ENCODE measurements at regions of chr13 and their contacts with region 1.

Region 1: DNA sequence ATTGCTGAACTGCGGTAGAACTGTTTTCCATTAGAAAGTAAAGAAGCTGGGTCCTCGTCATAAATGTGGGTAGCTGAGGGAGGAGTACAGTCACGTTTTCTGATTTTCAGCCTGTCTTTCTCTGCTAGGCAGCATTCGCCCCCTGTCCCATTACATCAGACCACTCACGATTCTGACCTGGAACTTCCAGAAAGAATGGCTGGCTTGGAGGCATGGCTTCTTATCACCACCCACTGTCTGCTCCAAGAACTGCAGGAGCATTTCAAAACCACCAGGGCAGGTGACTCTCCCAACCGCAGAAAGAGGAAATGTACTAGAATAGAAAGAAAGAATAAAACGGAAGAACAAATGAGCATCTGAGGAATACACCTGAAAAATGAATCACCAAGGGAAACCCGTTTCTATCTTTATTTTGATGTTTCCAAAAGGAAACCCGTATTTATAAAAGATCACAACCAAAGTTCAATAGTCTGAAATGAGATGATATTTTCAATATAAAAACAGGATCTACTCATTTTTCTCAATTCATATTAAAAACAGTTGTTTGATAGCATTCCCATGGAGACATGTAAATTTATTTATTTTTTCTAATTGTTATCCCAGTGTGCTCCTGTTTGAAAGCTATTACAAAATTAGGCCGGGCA is 22.1 kb upstream of the POMP start:
- DNase-seq: peak; percentile 75
- ATAC-seq: peak; percentile 75
- H3K4me3 ChIP-seq: no peak overlapping the region
- H3K27ac ChIP-seq: no peak overlapping the region
- H3K4me1 ChIP-seq: peaks cover 8% of the 10 kb centered on the region; the same call in 1 of the 2 replicates
- H3K27me3 ChIP-seq: no peaks in the 10 kb centered on the region; the same call in 1 of the 2 replicates
- CTCF ChIP-seq: peak; percentile 86

Region 2: GRCh38 chr13:28058866-28059624 is 577.8 kb before region 1 on chr13:
- CTCF ChIA-PET with region 1: no interaction called
- POLR2A ChIA-PET with region 1: no interaction called
- intact Hi-C with region 1: loop called (anchors 5 kb)
- DNase-seq: peak; percentile 54
- ATAC-seq: no peak
- H3K4me3 ChIP-seq: no peak overlapping the region
- H3K27ac ChIP-seq: no peak overlapping the region
- H3K4me1 ChIP-seq: no peaks in the 10 kb centered on the region
- H3K27me3 ChIP-seq: peaks cover 35% of the 10 kb centered on the region
- CTCF ChIP-seq: peak; percentile 73

Region 3: DNA sequence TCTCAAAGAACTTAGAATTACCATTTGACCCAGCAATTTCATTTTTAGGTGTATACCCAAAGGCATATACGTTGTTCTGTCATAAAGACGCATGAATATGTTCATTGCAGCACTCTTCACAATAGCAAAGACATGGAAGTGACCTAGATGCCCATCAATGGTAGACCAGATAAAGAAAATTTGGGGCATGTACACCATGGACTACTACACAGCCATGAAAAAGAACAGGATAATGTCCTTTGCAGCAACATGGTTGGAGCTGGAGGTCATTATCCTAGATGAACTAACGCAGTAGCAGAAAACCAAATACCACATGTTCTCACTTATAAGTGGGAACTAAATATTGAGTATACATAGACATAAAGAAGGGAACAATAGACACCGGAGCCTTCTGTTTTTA is 477.7 kb before region 1 on chr13:
- CTCF ChIA-PET with region 1: no interaction called
- POLR2A ChIA-PET with region 1: no interaction called
- intact Hi-C with region 1: loop called (anchors 5 kb)
- DNase-seq: no peak
- ATAC-seq: no peak
- H3K4me3 ChIP-seq: no peak overlapping the region
- H3K27ac ChIP-seq: no peak overlapping the region
- H3K4me1 ChIP-seq: no peaks in the 10 kb centered on the region
- H3K27me3 ChIP-seq: no peaks in the 10 kb centered on the region
- CTCF ChIP-seq: no peak

Region 4: DNA sequence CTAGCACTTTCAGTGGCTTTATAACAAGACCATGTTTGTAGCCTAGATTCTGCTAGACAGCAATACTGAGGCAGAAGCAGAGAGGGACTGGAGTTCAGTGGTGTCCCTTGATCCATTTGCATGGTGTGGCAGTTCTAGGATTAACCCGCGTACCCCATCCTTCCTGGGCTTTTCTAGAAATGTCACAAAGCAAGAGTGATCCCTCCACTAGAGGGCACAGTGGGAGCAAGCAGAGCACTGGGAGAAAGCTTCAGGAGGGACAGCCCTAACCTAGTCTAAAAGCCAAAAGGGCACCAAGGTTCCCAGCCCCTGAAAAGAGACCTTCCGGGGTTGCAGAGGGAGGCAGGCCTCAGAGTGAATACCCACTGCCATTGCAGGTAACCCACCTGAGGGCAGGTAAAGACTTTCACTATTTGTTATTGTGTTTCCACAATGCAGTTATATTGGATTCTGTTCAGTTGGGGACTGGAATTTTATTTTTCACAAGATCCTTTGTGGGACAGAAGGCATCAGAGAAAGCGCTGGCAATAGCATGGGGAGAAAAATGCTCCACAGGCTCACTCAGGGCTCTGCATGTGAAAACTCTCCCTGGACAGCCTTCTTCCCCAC is 312.5 kb before region 1 on chr13:
- CTCF ChIA-PET with region 1: no interaction called
- POLR2A ChIA-PET with region 1: no interaction called
- intact Hi-C with region 1: loop called (anchors 1 kb)
- DNase-seq: peak; percentile 67
- ATAC-seq: peak; percentile 74
- H3K4me3 ChIP-seq: no peak overlapping the region
- H3K27ac ChIP-seq: peak overlapping the region; percentile 20; the same call in 1 of the 2 replicates
- H3K4me1 ChIP-seq: peaks cover 23% of the 10 kb centered on the region
- H3K27me3 ChIP-seq: no peaks in the 10 kb centered on the region
- CTCF ChIP-seq: peak; percentile 83

Measured in PC-3 (cell line).